GM23248 (cell line): ENCODE measurements at regions of chr1 and their contacts with region 1.

Region 1: DNA sequence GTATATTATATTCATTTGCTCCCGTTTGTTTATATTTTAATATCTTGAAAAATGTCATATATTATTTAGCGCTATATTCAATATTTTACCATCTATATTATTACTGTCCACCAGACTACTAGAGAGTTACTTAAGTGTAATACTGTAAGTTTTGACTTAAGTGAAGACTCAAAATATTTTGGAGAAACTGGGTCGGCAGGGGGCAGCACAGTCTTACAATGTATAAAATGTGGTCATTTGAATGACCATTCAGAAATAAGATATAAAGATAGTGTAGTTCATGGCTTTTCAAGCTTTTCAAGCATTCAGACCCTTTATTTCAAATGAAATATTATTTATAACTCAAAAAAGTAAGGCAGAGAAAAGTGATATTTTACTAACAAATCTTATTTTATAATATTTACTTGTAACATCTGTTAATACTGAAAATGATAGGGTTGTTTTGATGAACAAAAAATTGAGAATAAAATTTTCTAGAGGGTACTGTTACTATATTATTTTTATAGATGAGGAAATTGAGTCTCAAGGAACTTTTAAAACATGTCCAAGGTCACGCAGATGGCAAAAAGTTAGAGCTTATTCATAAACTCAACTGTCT is 89.0 kb upstream of the SERTAD4 start:
- DNase-seq: peak; percentile 75
- H3K4me3 ChIP-seq: no peak overlapping the region
- H3K27ac ChIP-seq: no peak overlapping the region
- H3K4me1 ChIP-seq: no peaks in the 10 kb centered on the region
- H3K27me3 ChIP-seq: no peaks in the 10 kb centered on the region

Region 2: DNA sequence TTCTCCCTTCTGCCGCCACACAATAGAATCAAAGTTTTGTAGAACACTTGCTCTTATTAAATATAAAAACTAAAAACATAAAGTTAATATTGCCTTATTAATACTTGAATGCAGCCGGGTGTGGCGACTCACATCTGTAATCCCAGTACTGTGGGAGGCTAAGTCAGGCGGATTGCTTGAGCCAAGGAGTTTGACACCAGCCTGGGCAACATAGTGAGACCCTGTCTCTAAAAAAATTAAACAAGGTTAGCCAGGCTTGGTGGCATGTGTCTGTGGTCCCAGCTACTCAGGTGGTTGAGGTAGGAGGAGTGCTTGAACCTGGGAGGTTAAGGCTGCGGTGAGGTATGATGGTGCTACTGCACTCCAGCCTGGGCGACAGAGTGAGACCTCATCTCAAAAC is 172.0 kb after region 1 on chr1:
- in situ Hi-C with region 1: loop called (anchors 5 kb)
- DNase-seq: no peak
- H3K4me3 ChIP-seq: no peak overlapping the region
- H3K27ac ChIP-seq: no peak overlapping the region
- H3K4me1 ChIP-seq: no peaks in the 10 kb centered on the region
- H3K27me3 ChIP-seq: peaks cover 14% of the 10 kb centered on the region